Activated CD8-positive, alpha-beta T cell treated with anti-CD3 and anti-CD28 coated beads, Interleukin-2, amount 10 ng/mL, durations not matched to agents 7 days and 5 days (primary cell): ENCODE measurements at regions of chr6 and their contacts with region 1.

Region 1: DNA sequence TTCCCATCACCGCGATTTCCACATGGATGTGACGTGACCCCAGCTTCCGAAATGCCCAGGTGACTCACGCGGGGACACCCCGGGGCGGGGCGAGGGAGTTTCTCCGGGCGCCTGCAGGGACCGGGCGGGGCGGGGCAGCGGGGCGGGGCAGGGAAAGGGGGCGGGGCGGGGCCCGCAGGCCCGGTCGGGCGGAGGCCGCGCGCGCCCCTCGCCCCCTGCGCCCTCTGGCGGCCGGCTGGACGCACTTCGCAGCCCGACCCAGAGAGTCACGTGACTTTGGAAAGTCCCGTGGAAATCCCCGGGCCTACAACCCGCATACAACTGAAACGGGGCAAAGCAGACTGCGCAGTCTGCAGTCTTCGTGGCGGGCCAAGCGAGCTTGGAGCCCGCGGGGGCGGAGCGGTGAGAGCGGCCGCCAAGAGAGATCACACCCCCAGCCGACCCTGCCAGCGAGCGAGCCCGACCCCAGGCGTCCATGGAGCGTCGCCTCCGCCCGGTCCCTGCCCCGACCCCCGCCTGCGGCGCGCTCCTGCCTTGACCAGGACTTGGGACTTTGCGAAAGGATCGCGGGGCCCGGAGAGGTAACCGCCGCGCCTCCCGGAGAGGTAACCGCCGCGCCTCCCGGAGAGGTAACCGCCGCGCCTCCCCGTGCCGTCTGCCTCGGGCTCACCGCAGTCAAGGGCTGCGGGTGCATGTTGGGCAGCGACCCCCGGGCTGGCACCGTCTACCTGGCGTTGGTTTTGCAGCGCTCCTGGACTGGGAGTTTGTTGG is at the start of gene TNFAIP3:
- DNase-seq: peak; percentile 94
- ATAC-seq: peak; percentile 82
- H3K4me3 Mint-ChIP-seq: peak within 1 kb of the TSS; percentile 94
- H3K27ac Mint-ChIP-seq: peak within 1 kb of the TSS; percentile 92
- H3K4me1 Mint-ChIP-seq: peaks cover 59% of the 10 kb centered on the region
- H3K27me3 Mint-ChIP-seq: no peaks in the 10 kb centered on the region
- total RNA-seq, gene TNFAIP3: 29.6 to 34.5 TPM

Region 2: DNA sequence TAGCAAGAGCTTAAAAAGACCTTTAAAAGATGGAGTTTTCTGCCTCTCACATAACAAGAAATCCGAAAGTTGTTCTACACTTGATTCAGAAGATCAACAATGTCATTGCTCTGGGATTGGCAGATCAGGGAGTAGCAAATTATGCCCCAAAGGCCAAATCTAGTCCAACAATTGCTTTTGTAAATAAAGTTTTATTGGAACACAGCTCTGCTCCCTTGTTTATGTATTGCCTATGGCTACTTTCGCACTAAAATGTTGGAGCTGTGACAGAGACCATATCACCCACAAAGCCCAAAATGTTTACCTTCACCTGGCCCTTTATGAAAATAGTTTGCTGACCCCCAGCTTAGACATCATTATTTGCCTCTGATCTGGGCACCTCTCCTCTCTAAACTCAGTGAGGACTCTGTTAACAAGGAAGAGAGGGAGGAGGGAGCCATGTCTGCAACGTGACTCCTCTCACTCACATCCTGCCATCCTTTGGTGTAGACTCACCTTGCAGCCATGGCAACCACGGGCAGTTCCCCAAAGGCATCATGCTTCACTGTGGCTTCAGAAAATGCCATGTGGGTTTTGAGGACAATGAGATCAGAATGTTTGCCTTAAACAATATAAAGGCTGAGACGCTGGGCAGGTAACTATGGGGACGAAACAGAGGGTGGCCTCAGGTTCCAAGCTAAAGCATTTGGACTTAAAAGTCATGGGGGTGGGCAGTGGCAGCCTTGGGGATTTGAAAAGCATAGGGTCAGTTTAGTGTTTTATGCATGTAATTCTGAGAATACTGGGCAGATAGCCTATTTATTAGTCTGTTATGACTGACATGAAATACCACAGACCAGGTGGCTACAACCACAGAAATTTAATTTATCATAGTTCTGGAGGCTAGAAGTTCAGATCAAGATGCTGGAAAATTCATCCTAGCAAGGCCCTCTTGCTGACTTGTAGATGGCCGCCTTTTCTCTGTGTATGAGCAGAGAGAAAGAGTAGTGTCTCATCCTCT is 149.7 kb before region 1 on chr6:
- CTCF ChIA-PET with region 1: interaction called, 32 read pairs
- POLR2A ChIA-PET with region 1: interaction called, 39 read pairs
- DNase-seq: peak; percentile 88
- ATAC-seq: peak; percentile 72
- H3K4me3 Mint-ChIP-seq: no peak overlapping the region
- H3K27ac Mint-ChIP-seq: peak overlapping the region; percentile 84
- H3K4me1 Mint-ChIP-seq: peaks cover 55% of the 10 kb centered on the region
- H3K27me3 Mint-ChIP-seq: no peaks in the 10 kb centered on the region

Region 3: DNA sequence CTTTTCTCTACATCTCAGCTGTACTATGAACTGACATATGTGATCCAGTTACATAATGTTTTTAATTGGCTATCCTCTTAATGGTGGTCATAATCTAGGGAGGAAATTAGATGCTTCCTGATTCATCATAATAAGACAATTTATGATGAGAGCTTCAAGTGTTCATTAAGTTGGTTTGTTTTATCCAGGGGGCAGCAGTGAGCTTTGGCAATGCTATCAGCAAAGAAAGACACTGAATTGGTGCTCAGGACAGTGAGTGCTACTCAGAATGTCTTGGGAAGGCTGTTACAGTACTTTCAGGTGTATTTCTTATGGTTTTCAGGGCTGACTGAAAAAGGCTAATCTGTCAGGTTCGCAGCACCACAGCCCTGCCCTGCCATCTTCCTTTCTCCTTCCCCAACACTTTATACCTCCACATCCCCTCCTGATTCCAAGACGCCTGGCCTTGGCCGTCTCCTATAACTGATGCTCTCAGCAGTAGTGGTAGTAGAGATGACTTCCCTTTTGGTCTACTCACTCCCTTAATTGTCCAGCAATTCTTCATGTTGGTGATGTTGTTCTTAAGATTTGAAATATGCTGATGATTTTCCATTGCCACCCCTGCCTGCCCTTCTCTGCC is 67.0 kb before region 1 on chr6:
- CTCF ChIA-PET with region 1: interaction called, 399 read pairs
- POLR2A ChIA-PET with region 1: interaction called, 69 read pairs
- DNase-seq: peak; percentile 75
- ATAC-seq: peak; percentile 74
- H3K4me3 Mint-ChIP-seq: no peak overlapping the region
- H3K27ac Mint-ChIP-seq: peak overlapping the region; percentile 60
- H3K4me1 Mint-ChIP-seq: peaks cover 64% of the 10 kb centered on the region
- H3K27me3 Mint-ChIP-seq: no peaks in the 10 kb centered on the region

Region 4: DNA sequence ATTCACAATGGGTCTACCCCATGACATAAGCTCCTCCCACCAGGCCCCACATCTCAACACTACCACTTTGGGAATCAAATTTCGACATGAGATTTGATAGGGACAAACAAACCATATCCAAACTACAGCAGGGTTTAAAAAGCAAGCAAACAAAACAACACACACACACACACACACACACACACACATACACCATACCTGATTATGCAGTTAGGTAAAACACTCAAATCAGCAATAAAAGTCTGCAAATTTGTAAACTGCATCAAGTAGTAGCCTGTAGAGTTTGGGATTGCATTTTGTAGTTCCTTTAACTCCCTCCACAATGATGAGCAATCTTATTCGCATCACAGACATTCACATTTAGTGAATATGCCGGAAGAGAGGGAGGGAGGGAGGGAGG is 32.6 kb before region 1 on chr6:
- CTCF ChIA-PET with region 1: interaction called, 57 read pairs
- POLR2A ChIA-PET with region 1: interaction called, 5 read pairs
- DNase-seq: peak; percentile 14
- ATAC-seq: no peak
- H3K4me3 Mint-ChIP-seq: no peak overlapping the region
- H3K27ac Mint-ChIP-seq: no peak overlapping the region
- H3K4me1 Mint-ChIP-seq: peaks cover 17% of the 10 kb centered on the region
- H3K27me3 Mint-ChIP-seq: no peaks in the 10 kb centered on the region

Region 5: GRCh38 chr6:137944793-137945498 is 77.8 kb after region 1 on chr6:
- CTCF ChIA-PET with region 1: interaction called, 555 read pairs
- POLR2A ChIA-PET with region 1: interaction called, 16 read pairs
- DNase-seq: no peak
- ATAC-seq: peak; percentile 65
- H3K4me3 Mint-ChIP-seq: no peak overlapping the region
- H3K27ac Mint-ChIP-seq: no peak overlapping the region
- H3K4me1 Mint-ChIP-seq: peaks cover 24% of the 10 kb centered on the region
- H3K27me3 Mint-ChIP-seq: no peaks in the 10 kb centered on the region

Region 6: GRCh38 chr6:138440758-138441357 is 573.8 kb after region 1 on chr6:
- CTCF ChIA-PET with region 1: no interaction called
- POLR2A ChIA-PET with region 1: no interaction called
- DNase-seq: no peak
- ATAC-seq: no peak
- H3K4me3 Mint-ChIP-seq: no peak overlapping the region
- H3K27ac Mint-ChIP-seq: no peak overlapping the region
- H3K4me1 Mint-ChIP-seq: no peaks in the 10 kb centered on the region
- H3K27me3 Mint-ChIP-seq: peaks cover 2% of the 10 kb centered on the region